ENCODE measurements at regions of chr15 and their contacts with region 1.

Region 1: GRCh38 chr15:89087830-89088604 is at the start of gene ABHD2:
- DNase-seq: peak; percentile 98

Region 2: DNA sequence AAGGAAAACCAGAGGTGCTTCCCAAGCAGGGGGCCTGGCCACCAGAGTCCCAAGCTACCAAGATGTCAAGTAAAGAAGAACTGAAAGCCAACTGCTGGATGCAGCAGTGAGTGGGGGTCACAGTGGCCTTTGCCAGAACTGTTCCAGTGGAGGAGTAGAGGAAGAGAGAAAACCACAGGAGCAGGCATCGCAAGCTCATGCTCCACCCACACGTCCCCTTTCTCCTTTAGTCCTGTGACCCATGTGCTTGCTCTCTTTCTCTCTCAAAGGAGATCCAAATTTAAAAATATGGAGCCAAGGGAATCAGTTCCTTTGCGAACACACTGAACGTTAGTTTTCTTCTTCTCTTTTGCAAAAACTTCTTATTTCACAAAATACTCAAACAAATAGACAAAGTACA is 12.2 kb before region 1 on chr15:
- CTCF ChIA-PET with region 1: interaction called, 6 read pairs
- POLR2A ChIA-PET with region 1: interaction called, 10 read pairs
- DNase-seq: no peak

Region 3: GRCh38 chr15:89101302-89102191 is 13.5 kb after region 1 on chr15:
- CTCF ChIA-PET with region 1: interaction called, 3 read pairs
- POLR2A ChIA-PET with region 1: interaction called, 28 read pairs
- DNase-seq: no peak

Region 4: DNA sequence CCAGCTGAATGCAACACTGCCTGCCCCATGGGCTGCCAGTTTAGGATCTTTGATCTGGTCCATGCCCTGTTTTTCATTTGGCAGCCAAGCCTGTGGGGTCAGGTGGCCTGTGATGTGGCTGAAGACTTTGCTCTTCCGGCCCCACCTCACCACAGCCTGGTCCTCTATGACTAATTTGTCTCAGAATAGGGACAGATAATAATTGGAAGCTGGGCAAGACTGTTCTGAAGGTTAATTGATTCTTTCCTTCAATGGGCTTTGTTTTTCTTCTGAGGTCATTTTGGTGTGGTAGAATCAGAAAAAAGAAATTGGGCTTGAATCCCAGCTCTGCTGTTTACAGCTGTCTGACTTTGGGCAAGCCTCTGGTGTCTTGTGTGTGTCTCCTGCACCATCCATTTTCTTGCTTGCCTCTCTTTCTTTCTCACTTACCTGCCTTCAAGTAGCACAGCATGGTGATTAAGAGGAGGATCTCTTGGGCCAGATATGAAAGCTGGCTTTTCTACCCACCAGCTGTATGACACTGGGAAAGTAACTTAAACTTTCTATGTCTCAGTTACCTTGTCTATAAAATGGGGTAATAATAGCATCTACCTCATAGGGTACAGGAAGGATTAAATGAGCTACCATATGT is 24.4 kb after region 1 on chr15:
- CTCF ChIA-PET with region 1: interaction called, 4 read pairs
- POLR2A ChIA-PET with region 1: interaction called, 12 read pairs
- DNase-seq: no peak

Region 5: GRCh38 chr15:89184357-89184756 is 96.3 kb after region 1 on chr15:
- CTCF ChIA-PET with region 1: no interaction called
- POLR2A ChIA-PET with region 1: no interaction called
- DNase-seq: no peak

Region 6: GRCh38 chr15:89514596-89515406 is 426.8 kb after region 1 on chr15:
- CTCF ChIA-PET with region 1: no interaction called
- POLR2A ChIA-PET with region 1: no interaction called
- DNase-seq: no peak

Measured in HEK293T (cell line).